Breast epithelium (tissue), 4 donors: ENCODE measurements at regions of chr19 and their contacts with region 1.

Region 1: GRCh38 chr19:40954573-40954972 is 36.5 kb upstream of the CYP2B6 start:
- DNase-seq: no peak
- H3K4me3 ChIP-seq: no peak overlapping the region
- H3K27ac ChIP-seq: no peak overlapping the region
- H3K4me1 ChIP-seq: no peaks in the 10 kb centered on the region
- H3K27me3 ChIP-seq: no peaks in the 10 kb centered on the region
- CTCF ChIP-seq: no peak
- POLR2A ChIP-seq: no peak

Region 2: DNA sequence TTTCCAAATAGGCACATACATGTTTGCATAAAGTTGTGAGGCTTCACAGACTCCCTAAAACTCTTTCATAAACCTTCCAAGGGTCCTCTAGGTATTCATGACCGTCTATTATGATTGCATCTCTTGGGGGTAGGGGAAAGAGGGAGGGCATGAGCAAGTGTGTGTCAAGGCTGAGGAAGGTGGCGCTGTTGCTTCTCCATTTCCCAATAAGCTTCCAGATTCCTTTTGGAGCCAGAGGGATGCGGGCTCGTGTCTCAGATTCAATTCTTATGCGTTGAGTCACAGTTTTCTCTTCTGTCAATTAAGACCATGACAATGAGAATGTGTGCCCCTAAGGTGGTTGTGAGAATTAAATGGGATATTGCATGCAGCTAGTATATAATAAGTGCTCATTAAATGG is 21.5 kb before region 1 on chr19:
- intact Hi-C with region 1: no loop called
- DNase-seq: no peak
- H3K4me3 ChIP-seq: no peak overlapping the region
- H3K27ac ChIP-seq: no peak overlapping the region
- H3K4me1 ChIP-seq: no peaks in the 10 kb centered on the region
- H3K27me3 ChIP-seq: no peaks in the 10 kb centered on the region
- CTCF ChIP-seq: no peak
- POLR2A ChIP-seq: no peak

Region 3: GRCh38 chr19:41000310-41000737 is 45.8 kb after region 1 on chr19:
- intact Hi-C with region 1: no loop called
- DNase-seq: no peak
- H3K4me3 ChIP-seq: no peak overlapping the region
- H3K27ac ChIP-seq: no peak overlapping the region
- H3K4me1 ChIP-seq: no peaks in the 10 kb centered on the region
- H3K27me3 ChIP-seq: peaks cover 0 to 4% of the 10 kb centered on the region in 2 donors
- CTCF ChIP-seq: no peak
- POLR2A ChIP-seq: no peak

Region 4: GRCh38 chr19:41308392-41309179 is 354.0 kb after region 1 on chr19:
- intact Hi-C with region 1: loop called (anchors 5 kb)
- DNase-seq: peak; percentile 92 to 97
- H3K4me3 ChIP-seq: peak overlapping the region; percentile 74 to 94 (median 79)
- H3K27ac ChIP-seq: peak overlapping the region; percentile 96 to 98
- H3K4me1 ChIP-seq: peaks cover 3 to 18% of the 10 kb centered on the region in 2 donors
- H3K27me3 ChIP-seq: no peaks in the 10 kb centered on the region
- CTCF ChIP-seq: peak; percentile 98 to 99 (median 98)
- POLR2A ChIP-seq: no peak

Region 5: GRCh38 chr19:41837981-41838708 is 883.6 kb after region 1 on chr19:
- intact Hi-C with region 1: no loop called
- DNase-seq: no peak
- H3K4me3 ChIP-seq: no peak overlapping the region
- H3K27ac ChIP-seq: no peak overlapping the region
- H3K4me1 ChIP-seq: no peaks in the 10 kb centered on the region
- H3K27me3 ChIP-seq: peaks cover 0 to 19% of the 10 kb centered on the region in 2 donors
- CTCF ChIP-seq: no peak
- POLR2A ChIP-seq: no peak

Region 6: GRCh38 chr19:42961119-42961518 is 2006.5 kb after region 1 on chr19:
- intact Hi-C with region 1: loop called (anchors 10 kb)
- DNase-seq: no peak
- H3K4me3 ChIP-seq: no peak overlapping the region
- H3K27ac ChIP-seq: no peak overlapping the region
- H3K4me1 ChIP-seq: no peaks in the 10 kb centered on the region
- H3K27me3 ChIP-seq: no peaks in the 10 kb centered on the region
- CTCF ChIP-seq: no peak
- POLR2A ChIP-seq: no peak